Right ventricle myocardium inferior (tissue), 1 donor: ENCODE measurements at regions of chr1 and their contacts with region 1.

Region 1: GRCh38 chr1:171984850-171985485 is 143.7 kb downstream of the DNM3 start:
- DNase-seq: no peak
- ATAC-seq: peak; percentile 52

Region 2: DNA sequence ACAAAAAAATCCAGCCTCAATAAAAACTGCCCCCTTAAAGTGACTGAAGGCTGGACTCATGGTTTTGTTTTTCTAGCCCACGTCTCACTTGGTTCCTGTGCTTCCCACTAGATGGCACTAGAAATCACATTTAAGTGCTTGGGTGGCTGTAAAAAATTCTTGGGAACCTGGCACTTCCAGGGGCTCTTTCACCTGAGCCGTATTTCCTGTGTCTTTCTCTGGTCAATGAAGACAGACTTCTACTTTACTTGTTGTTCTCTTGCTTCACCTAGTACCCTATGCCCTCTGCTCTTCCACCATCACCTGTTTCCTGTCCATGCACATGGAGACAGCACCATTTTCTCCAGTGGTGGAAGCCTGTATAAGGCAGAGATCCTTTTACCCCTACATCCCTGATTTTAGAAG is 183.5 kb before region 1 on chr1:
- intact Hi-C with region 1: loop called (anchors 1 kb)
- DNase-seq: no peak
- ATAC-seq: peak; percentile 24

Region 3: GRCh38 chr1:172380441-172381244 is 395.7 kb after region 1 on chr1:
- intact Hi-C with region 1: no loop called
- DNase-seq: no peak
- ATAC-seq: no peak